Activated CD4-positive, alpha-beta memory T cell treated with anti-CD3 and anti-CD28 coated beads for 36 hours (primary cell): ENCODE measurements at regions of chr18 and their contacts with region 1.

Region 1: DNA sequence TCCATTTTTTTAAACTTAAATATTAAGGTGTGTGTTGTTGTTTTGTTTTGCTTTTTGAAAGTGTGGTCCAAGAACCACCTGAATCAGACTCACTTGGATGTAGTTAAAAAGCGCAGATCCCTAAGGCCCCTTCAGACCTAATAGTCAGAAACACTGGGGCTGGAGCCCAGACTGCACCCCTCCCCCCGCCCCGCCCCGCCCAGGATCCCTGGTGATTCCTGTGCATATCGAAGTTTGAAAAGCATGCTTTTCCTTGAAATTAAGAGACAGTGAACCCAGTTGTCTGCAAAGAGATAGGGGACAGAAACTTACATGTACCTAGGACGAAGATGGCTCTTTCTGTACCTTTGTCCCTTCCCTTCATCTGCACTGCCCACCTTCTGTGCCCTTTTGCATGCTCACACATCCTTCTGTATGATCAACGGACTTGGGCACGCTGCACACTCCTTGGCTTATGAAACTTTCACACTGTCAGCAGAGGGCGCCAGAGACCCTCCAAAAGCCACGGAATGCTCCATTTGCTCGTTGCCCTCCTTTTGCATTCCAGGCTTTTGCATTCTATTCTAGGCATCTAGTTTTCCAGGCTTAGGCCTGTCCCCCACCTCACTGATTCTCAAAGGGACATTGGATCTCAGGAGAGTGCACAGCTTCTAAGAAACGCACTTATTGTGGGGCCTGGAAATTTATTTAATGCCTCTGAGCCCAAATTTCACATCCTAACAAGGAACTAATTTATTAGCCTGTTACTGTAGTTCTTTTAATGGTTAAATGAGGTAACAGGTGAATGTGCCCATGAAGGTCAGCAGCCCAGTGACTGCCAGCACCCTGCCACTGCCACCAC is 32.8 kb upstream of the SLC14A1 start:
- DNase-seq: peak; percentile 84
- H3K4me3 Mint-ChIP-seq: no peak overlapping the region
- H3K27ac Mint-ChIP-seq: no peak overlapping the region
- H3K4me1 Mint-ChIP-seq: peaks cover 42% of the 10 kb centered on the region
- H3K27me3 Mint-ChIP-seq: peaks cover 6% of the 10 kb centered on the region

Region 2: DNA sequence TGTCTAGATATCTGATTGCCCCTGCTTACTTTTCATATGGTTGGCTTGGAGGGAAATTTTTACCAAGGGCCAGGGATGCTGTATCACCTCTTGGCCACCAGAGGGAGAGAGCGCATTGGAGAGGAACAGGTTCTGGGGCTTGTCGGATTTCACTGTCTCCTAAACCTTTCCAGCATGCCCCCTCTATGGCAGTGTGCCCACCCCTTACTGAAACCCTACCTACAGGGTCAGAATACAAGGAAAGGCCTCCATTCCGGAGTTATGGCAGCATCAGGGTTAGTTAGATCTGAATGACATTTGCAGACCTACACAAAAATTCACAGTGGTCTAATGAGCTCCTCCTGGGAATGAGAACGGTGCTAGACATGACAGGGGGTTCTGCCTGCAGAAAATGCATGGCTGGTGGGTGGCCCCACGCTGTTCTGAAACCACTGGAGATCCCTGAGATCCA is 70.1 kb before region 1 on chr18:
- CTCF ChIA-PET with region 1: interaction called, 3 read pairs
- POLR2A ChIA-PET with region 1: no interaction called
- intact Hi-C with region 1: loop called (anchors 1 kb)
- DNase-seq: peak; percentile 44
- H3K4me3 Mint-ChIP-seq: no peak overlapping the region
- H3K27ac Mint-ChIP-seq: no peak overlapping the region
- H3K4me1 Mint-ChIP-seq: no peaks in the 10 kb centered on the region
- H3K27me3 Mint-ChIP-seq: peaks cover 6% of the 10 kb centered on the region

Region 3: GRCh38 chr18:45670281-45670962 is 20.8 kb before region 1 on chr18:
- CTCF ChIA-PET with region 1: interaction called, 76 read pairs
- POLR2A ChIA-PET with region 1: interaction called, 5 read pairs
- intact Hi-C with region 1: loop called (anchors 1 kb)
- DNase-seq: peak; percentile 70
- H3K4me3 Mint-ChIP-seq: peak overlapping the region; percentile 62
- H3K27ac Mint-ChIP-seq: peak overlapping the region; percentile 72
- H3K4me1 Mint-ChIP-seq: peaks cover 52% of the 10 kb centered on the region
- H3K27me3 Mint-ChIP-seq: no peaks in the 10 kb centered on the region

Region 4: DNA sequence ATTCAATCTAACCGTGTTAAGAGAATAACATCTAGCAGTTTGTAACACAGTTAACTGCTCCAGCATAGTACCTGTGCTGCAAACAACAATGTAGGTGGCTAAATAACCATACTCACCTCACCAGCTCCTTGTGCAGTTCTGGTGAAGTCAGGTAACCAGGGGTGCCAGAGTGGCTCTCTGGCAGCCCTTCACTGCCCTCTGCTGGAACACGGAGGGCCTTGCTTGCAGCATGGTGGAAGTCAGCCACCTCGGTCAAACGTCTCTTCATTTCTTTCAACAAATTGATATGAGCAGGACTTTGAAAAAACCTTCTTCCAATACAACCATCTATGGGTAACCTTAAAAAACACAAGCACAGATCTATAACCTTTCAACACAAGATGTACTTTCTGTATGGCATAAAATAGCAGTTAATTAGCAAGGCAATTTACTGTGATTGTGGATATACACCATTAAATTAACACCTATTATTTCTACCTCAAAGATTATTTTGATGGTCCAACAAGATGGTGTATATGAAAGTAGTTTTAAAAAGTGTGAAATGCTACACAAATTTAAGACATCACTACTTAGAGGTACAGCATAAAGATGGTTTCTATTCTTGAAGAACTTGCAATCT is 219.3 kb after region 1 on chr18:
- CTCF ChIA-PET with region 1: interaction called, 12 read pairs
- POLR2A ChIA-PET with region 1: no interaction called
- intact Hi-C with region 1: loop called (anchors 1 kb)
- DNase-seq: peak; percentile 72
- H3K4me3 Mint-ChIP-seq: no peak overlapping the region
- H3K27ac Mint-ChIP-seq: no peak overlapping the region
- H3K4me1 Mint-ChIP-seq: no peaks in the 10 kb centered on the region
- H3K27me3 Mint-ChIP-seq: no peaks in the 10 kb centered on the region

Region 5: GRCh38 chr18:45967007-45967706 is 276.0 kb after region 1 on chr18 and contains the start of gene EPG5:
- CTCF ChIA-PET with region 1: no interaction called
- POLR2A ChIA-PET with region 1: no interaction called
- intact Hi-C with region 1: loop called (anchors 2 kb)
- DNase-seq: peak; percentile 97
- H3K4me3 Mint-ChIP-seq: peak within 1 kb of the TSS; percentile 93
- H3K27ac Mint-ChIP-seq: peak within 1 kb of the TSS; percentile 83
- H3K4me1 Mint-ChIP-seq: peaks cover 33% of the 10 kb centered on the region
- H3K27me3 Mint-ChIP-seq: no peaks in the 10 kb centered on the region
- total RNA-seq, gene EPG5: 18.8 to 21.4 TPM

Region 6: GRCh38 chr18:45974088-45974536 is 282.9 kb after region 1 on chr18:
- CTCF ChIA-PET with region 1: no interaction called
- POLR2A ChIA-PET with region 1: interaction called, 4 read pairs
- intact Hi-C with region 1: loop called (anchors 1 kb)
- DNase-seq: peak; percentile 83
- H3K4me3 Mint-ChIP-seq: no peak overlapping the region
- H3K27ac Mint-ChIP-seq: peak overlapping the region; percentile 78
- H3K4me1 Mint-ChIP-seq: peaks cover 5% of the 10 kb centered on the region
- H3K27me3 Mint-ChIP-seq: no peaks in the 10 kb centered on the region